ENCODE measurements at regions of chr1 and their contacts with region 1.

Region 1: GRCh38 chr1:181568736-181569135 is 85.4 kb downstream of the CACNA1E start:
- DNase-seq: no peak

Region 2: DNA sequence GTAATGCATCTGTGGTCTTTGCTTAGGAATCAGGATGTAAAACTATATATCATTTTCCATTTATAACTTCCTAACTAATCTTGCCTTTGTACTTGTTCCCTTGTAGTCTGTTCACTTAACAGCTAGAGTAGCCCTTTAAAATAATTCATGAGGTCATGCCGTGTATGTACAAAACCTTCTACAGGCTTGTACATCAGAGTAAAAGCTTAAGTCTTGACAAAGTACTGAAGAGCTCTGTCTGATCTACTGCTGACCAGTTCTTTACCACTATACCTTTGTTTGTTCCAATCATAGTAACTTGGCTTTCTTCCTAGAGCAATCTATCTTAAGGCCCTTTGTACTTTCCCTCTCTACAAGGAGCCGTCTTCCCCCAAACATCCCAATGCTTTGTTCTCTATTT is 746.8 kb before region 1 on chr1:
- intact Hi-C with region 1: no loop called
- DNase-seq: no peak

Region 3: GRCh38 chr1:181057079-181057478 is 511.7 kb before region 1 on chr1:
- intact Hi-C with region 1: loop called in 1 of 2 experiments (anchors 5 kb)
- DNase-seq: no peak